WTC11 (cell line): ENCODE measurements at regions of chrX and their contacts with region 1.

Region 1: DNA sequence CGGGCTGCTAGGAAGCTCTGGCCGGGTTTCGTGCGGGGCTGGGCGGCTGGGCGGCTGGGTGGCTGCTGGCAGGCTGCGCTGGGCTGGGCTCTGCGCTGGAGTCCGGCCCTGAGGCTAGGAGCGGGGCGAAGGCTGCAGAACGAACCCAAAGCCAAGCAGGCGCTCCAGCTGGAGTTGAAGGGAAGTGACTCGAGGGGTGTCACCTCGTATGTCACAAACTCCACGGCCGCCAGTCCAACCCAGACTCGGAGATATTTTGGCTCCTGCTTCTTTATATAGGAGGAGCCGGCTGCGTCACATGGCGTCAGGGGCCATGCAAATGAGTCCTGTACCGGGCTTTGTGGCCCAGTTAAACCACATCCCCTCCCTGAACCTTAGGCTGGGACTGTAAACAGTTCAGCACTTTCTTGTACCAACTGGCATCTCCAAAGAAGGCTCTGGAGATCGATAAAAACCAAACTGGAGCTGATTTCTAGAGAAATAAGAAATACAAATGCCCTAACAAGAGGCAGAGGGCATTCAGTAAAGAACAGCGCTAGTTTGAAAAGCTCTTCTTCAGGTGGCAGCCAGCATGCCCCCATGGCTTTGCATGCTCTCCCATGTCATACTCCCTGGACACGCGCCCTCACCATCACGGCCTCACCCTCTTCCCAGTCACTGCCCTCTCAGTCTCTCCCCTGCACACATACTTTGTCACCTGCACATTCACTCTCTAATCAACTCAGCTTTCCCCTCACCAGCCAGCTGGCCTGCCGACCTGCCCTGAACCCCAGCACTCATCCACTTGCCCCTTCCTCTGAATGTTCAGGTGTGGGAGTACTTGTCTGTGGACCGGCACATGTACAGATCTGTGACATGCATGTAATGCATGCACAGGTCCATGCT is 58.5 kb downstream of the TSC22D3 start:
- DNase-seq: peak; percentile 42
- ATAC-seq: peak; percentile 43
- H3K4me3 Mint-ChIP-seq: peak overlapping the region; percentile 78
- H3K27ac Mint-ChIP-seq: peak overlapping the region; percentile 31
- H3K4me1 Mint-ChIP-seq: peaks cover 37% of the 10 kb centered on the region
- H3K27me3 Mint-ChIP-seq: no peaks in the 10 kb centered on the region
- CTCF ChIP-seq: no peak

Region 2: GRCh38 chrX:107602694-107603239 is 114.3 kb before region 1 on chrX:
- CTCF ChIA-PET with region 1: no interaction called
- POLR2A ChIA-PET with region 1: no interaction called
- DNase-seq: no peak
- ATAC-seq: no peak
- H3K4me3 Mint-ChIP-seq: no peak overlapping the region
- H3K27ac Mint-ChIP-seq: no peak overlapping the region
- H3K4me1 Mint-ChIP-seq: peaks cover 12% of the 10 kb centered on the region
- H3K27me3 Mint-ChIP-seq: no peaks in the 10 kb centered on the region
- CTCF ChIP-seq: no peak

Region 3: DNA sequence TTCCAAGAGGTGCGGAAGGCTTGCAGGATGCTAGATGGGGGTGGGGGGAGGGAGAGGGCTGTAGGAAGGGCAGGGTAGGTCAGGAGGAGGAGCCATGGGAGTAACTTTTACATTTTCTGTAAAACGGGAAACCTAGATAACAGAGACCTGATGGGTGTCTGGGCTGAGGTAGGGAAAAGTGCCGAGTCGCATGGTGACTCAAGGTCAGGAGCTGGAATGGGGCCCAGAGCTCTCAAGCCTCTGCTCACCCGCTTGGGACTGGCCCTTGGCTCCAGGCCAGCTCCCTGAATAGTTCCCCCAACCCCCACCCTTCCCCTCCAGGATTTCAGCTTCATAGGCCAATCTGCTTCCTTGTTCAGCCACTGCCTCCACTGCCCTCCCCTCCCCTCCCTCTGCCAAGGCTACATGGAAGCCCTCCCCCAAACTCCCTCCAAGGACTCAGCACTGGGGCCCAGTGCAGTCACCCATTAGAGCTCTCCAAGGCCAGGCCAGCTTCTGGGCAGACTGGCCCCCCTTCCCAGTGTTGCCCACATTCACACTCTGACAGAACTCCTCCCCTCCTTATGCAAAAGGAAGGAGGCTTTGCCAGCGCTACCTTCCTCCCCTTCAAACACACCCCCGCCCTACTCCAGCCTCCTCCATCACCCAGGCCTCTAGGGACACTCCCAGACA is 14.9 kb after region 1 on chrX:
- CTCF ChIA-PET with region 1: interaction called, 28 read pairs
- POLR2A ChIA-PET with region 1: interaction called, 27 read pairs
- DNase-seq: peak; percentile 52
- ATAC-seq: peak; percentile 78
- H3K4me3 Mint-ChIP-seq: no peak overlapping the region
- H3K27ac Mint-ChIP-seq: peak overlapping the region; percentile 74
- H3K4me1 Mint-ChIP-seq: peaks cover 52% of the 10 kb centered on the region
- H3K27me3 Mint-ChIP-seq: no peaks in the 10 kb centered on the region
- CTCF ChIP-seq: no peak

Region 4: DNA sequence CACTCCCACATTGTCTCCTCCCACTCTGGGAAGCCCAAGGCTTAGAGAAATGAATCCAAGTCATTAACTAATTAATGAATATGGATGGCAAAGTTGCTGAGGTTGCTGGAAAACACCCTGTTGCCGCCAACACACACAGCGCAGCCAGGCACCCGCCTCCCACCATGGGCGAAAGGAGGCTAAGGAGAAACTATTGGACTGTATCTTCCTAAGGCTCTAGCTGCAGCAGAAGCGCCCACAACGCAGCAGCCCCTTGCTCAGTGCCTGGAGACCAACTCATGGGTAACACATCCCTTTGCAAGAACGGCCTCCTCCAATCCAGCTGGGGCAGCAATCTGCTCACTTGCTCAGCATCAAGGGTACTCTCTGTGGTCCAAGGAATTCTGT is 24.3 kb after region 1 on chrX:
- CTCF ChIA-PET with region 1: interaction called, 3 read pairs
- POLR2A ChIA-PET with region 1: interaction called, 13 read pairs
- DNase-seq: no peak
- ATAC-seq: peak; percentile 18
- H3K4me3 Mint-ChIP-seq: peak overlapping the region; percentile 86
- H3K27ac Mint-ChIP-seq: peak overlapping the region; percentile 89
- H3K4me1 Mint-ChIP-seq: peaks cover 31% of the 10 kb centered on the region
- H3K27me3 Mint-ChIP-seq: peaks cover 9% of the 10 kb centered on the region; the same call in 1 of the 2 replicates
- CTCF ChIP-seq: no peak

Region 5: GRCh38 chrX:107849740-107850421 is 132.8 kb after region 1 on chrX:
- CTCF ChIA-PET with region 1: no interaction called
- POLR2A ChIA-PET with region 1: no interaction called
- DNase-seq: peak; percentile 23
- ATAC-seq: peak; percentile 59; the same call in 1 of the 2 replicates
- H3K4me3 Mint-ChIP-seq: no peak overlapping the region
- H3K27ac Mint-ChIP-seq: no peak overlapping the region
- H3K4me1 Mint-ChIP-seq: peaks cover 14% of the 10 kb centered on the region
- H3K27me3 Mint-ChIP-seq: no peaks in the 10 kb centered on the region
- CTCF ChIP-seq: no peak